ENCODE measurements at regions of chr3 and their contacts with region 1.

Region 1: DNA sequence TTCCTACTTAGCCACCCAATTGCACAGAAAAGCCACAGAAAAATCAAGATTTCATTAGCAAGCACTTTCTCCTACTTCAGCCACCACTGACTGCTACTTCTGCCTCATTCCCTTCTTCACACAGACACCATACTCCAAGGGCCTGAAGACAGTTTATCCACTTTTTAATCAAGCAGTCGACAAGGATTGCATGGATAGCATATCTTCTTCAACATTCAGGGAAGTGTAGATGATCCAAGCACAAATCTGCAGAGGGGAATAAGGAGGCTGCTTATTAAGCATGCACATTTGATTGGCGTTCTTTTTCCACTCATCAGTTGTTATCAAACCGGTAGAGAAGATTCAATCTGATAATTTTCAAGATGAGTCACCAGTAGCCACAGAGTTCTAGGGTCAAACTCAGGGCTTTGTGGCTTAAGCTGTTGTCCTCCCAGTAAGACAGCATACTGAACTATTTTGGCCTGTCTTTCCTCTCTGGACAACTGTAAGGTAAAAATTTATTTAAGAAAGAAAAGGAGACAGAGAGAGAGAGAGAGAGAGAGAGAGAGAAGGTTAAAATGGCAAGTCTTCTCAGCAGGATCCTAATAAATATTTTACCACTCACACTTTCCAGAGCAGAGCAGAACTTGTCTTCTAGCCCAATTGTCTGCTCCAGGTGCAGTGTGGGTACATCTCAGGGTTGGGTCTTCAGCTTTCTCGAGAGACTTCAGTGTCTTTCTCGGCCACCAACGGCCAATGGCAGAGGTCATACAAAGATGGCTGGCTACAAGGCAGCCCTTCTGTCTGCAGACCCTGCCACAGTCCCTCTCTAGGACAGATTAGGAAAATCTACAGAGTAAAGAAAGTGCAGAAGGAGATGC is 80.6 kb upstream of the BHLHE40 start:
- DNase-seq: peak; percentile 53
- ATAC-seq: peak; percentile 97
- H3K4me3 ChIP-seq: no peak overlapping the region; the same call in 1 of the 2 replicates
- H3K27ac ChIP-seq: peak overlapping the region; percentile 28
- H3K4me1 ChIP-seq: peaks cover 16% of the 10 kb centered on the region
- H3K27me3 ChIP-seq: no peaks in the 10 kb centered on the region
- CTCF ChIP-seq: no peak
- EP300 ChIP-seq: peak; percentile 69 to 91; a peak in 3 of 4 replicates
- POLR2A ChIP-seq: no peak
- RAD21 ChIP-seq: no peak

Region 2: GRCh38 chr3:4834403-4834866 is 64.2 kb before region 1 on chr3:
- CTCF ChIA-PET with region 1: no interaction called
- POLR2A ChIA-PET with region 1: no interaction called
- RAD21 ChIA-PET with region 1: no interaction called
- SMC1A ChIA-PET with region 1: interaction called, 4 read pairs
- in situ Hi-C with region 1: no loop called
- intact Hi-C with region 1: loop called (anchors 5 kb)
- DNase-seq: no peak
- ATAC-seq: peak; percentile 63
- H3K4me3 ChIP-seq: no peak overlapping the region
- H3K27ac ChIP-seq: peak overlapping the region; percentile 43; the same call in 1 of the 2 replicates
- H3K4me1 ChIP-seq: peaks cover 43% of the 10 kb centered on the region
- H3K27me3 ChIP-seq: no peaks in the 10 kb centered on the region
- CTCF ChIP-seq: no peak
- EP300 ChIP-seq: peak; percentile 89 to 95; a peak in 3 of 4 replicates
- POLR2A ChIP-seq: no peak
- RAD21 ChIP-seq: 0 out of 2 replicates have a peak, but pooled peaks have one; percentile 4

Region 3: GRCh38 chr3:4880850-4881249 is 17.8 kb before region 1 on chr3:
- CTCF ChIA-PET with region 1: interaction called, 3 read pairs
- POLR2A ChIA-PET with region 1: interaction called, 3 read pairs
- RAD21 ChIA-PET with region 1: interaction called, 3 read pairs
- SMC1A ChIA-PET with region 1: interaction called, 11 read pairs
- in situ Hi-C with region 1: no loop called
- intact Hi-C with region 1: no loop called
- DNase-seq: no peak
- ATAC-seq: no peak
- H3K4me3 ChIP-seq: no peak overlapping the region
- H3K27ac ChIP-seq: no peak overlapping the region
- H3K4me1 ChIP-seq: no peaks in the 10 kb centered on the region
- H3K27me3 ChIP-seq: no peaks in the 10 kb centered on the region
- CTCF ChIP-seq: no peak
- EP300 ChIP-seq: no peak
- POLR2A ChIP-seq: no peak
- RAD21 ChIP-seq: no peak

Measured in GM12878 (cell line).